Endothelial cell of umbilical vein (primary cell): ENCODE measurements at regions of chr2 and their contacts with region 1.

Region 1: GRCh38 chr2:134446383-134447017 is 192.6 kb downstream of the MGAT5 start:
- DNase-seq: peak; percentile 90
- H3K4me3 ChIP-seq: no peak overlapping the region
- H3K27ac ChIP-seq: peak overlapping the region; percentile 45
- H3K4me1 ChIP-seq: peaks cover 43% of the 10 kb centered on the region
- H3K27me3 ChIP-seq: no peaks in the 10 kb centered on the region
- CTCF ChIP-seq: no peak
- POLR2A ChIP-seq: peak; percentile 33

Region 2: GRCh38 chr2:133886735-133887660 is 559.5 kb before region 1 on chr2:
- CTCF ChIA-PET with region 1: interaction called, 155 read pairs
- POLR2A ChIA-PET with region 1: no interaction called
- dilution Hi-C with region 1: no loop called
- intact Hi-C with region 1: loop called (anchors 1 kb)
- DNase-seq: peak; percentile 61
- H3K4me3 ChIP-seq: no peak overlapping the region
- H3K27ac ChIP-seq: no peak overlapping the region
- H3K4me1 ChIP-seq: peaks cover 6% of the 10 kb centered on the region
- H3K27me3 ChIP-seq: peaks cover 0 to 26% of the 10 kb centered on the region in 2 experiments
- CTCF ChIP-seq: peak; percentile 60 to 65
- POLR2A ChIP-seq: no peak

Region 3: DNA sequence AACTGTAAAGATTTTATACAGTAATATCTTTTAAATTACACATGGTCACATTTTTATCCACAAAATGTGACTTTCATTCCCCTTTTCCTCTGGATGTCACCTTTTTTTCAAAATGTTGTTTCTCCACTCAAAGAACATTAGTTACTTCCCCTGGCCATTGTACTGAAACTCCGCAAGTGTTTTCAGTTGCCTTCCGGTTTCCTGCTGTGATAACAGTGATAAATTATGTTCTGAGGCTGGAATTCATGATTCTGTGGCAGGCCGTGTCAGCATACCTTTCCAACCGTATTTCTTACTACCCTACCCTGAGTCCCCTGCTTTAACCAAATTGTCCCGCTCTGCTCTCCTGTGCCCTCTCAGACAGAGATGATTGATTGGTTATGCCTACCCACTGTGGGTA is 139.2 kb before region 1 on chr2:
- CTCF ChIA-PET with region 1: interaction called, 11 read pairs
- POLR2A ChIA-PET with region 1: no interaction called
- dilution Hi-C with region 1: no loop called
- intact Hi-C with region 1: loop called (anchors 1 kb)
- DNase-seq: peak; percentile 91
- H3K4me3 ChIP-seq: peak overlapping the region in 1 of 3 experiments; percentile 26
- H3K27ac ChIP-seq: peak overlapping the region; percentile 91
- H3K4me1 ChIP-seq: peaks cover 72% of the 10 kb centered on the region
- H3K27me3 ChIP-seq: no peaks in the 10 kb centered on the region
- CTCF ChIP-seq: no peak
- POLR2A ChIP-seq: peak; percentile 56

Region 4: GRCh38 chr2:134375935-134376334 is 70.6 kb before region 1 on chr2:
- CTCF ChIA-PET with region 1: interaction called, 234 read pairs
- POLR2A ChIA-PET with region 1: interaction called, 3 read pairs
- dilution Hi-C with region 1: no loop called
- intact Hi-C with region 1: loop called (anchors 1 kb)
- DNase-seq: peak; percentile 64
- H3K4me3 ChIP-seq: no peak overlapping the region
- H3K27ac ChIP-seq: no peak overlapping the region
- H3K4me1 ChIP-seq: peaks cover 6% of the 10 kb centered on the region
- H3K27me3 ChIP-seq: no peaks in the 10 kb centered on the region
- CTCF ChIP-seq: peak; percentile 30 to 46
- POLR2A ChIP-seq: no peak

Region 5: DNA sequence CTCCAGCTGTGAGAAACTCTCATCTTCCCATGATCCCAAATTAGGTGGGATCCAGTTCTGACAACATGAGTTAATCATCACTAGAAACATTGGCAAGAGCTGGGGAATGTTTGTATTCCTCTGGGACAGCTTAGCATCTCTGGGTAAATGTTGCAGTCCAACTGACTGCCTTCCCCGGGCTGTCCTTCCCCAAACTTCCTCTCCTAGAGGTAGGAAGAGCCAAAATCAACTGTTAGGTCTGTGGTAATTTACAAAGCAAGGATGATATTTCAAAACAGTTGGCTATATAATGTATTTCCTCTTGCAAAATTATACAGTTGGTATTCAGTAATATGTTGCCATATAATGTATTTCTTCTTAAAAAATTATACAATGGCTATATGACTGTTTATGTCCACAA is 44.1 kb before region 1 on chr2:
- CTCF ChIA-PET with region 1: interaction called, 48 read pairs
- POLR2A ChIA-PET with region 1: interaction called, 3 read pairs
- dilution Hi-C with region 1: no loop called
- intact Hi-C with region 1: loop called (anchors 1 kb)
- DNase-seq: peak; percentile 21
- H3K4me3 ChIP-seq: no peak overlapping the region
- H3K27ac ChIP-seq: no peak overlapping the region
- H3K4me1 ChIP-seq: peaks cover 60% of the 10 kb centered on the region
- H3K27me3 ChIP-seq: no peaks in the 10 kb centered on the region
- CTCF ChIP-seq: no peak
- POLR2A ChIP-seq: no peak

Region 6: DNA sequence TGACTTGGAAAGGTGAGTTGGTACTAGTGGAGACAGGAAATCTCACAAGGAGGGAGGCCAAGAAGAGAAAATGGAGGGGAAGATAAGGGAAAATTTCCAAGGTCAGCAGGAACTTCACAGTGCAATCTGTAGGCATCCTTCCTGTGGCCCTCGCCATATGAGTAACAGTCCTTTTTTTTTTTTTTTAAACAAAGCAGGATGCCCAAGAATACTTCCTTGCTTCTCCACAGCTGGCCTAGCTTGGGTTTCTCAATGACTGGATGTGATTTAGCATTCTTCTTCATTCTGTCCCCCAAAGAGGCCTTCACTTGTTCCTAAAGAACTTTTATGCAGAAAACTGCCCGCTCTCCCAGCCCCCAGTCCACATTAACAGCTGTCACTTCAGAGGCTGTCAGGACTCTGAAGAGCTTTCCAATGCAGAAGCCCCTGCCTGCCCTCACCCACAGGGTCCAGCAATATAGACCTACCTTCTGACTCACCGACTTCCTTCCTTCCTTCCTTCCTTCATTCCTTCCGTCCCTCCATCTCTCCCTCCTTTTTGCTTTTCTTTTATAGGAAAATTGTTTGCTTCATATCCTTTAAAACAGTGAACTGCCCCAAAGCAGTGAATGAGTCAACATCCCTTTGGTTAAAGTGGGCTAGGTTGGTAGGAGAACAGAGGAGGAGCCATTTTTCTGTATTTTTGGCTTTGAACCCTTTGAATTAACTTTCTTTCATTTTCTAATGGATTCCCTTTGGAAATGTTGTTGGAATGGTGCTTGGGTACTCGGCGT is 20.6 kb before region 1 on chr2:
- CTCF ChIA-PET with region 1: interaction called, 94 read pairs
- POLR2A ChIA-PET with region 1: no interaction called
- dilution Hi-C with region 1: no loop called
- intact Hi-C with region 1: loop called (anchors 1 kb)
- DNase-seq: peak; percentile 60
- H3K4me3 ChIP-seq: no peak overlapping the region
- H3K27ac ChIP-seq: peak overlapping the region; percentile 76
- H3K4me1 ChIP-seq: peaks cover 37% of the 10 kb centered on the region
- H3K27me3 ChIP-seq: no peaks in the 10 kb centered on the region
- CTCF ChIP-seq: no peak
- POLR2A ChIP-seq: no peak

Region 7: GRCh38 chr2:134431838-134432434 is 14.6 kb before region 1 on chr2:
- CTCF ChIA-PET with region 1: interaction called, 94 read pairs
- POLR2A ChIA-PET with region 1: no interaction called
- dilution Hi-C with region 1: no loop called
- intact Hi-C with region 1: no loop called
- DNase-seq: peak; percentile 55
- H3K4me3 ChIP-seq: no peak overlapping the region
- H3K27ac ChIP-seq: peak overlapping the region; percentile 45
- H3K4me1 ChIP-seq: peaks cover 33% of the 10 kb centered on the region
- H3K27me3 ChIP-seq: no peaks in the 10 kb centered on the region
- CTCF ChIP-seq: no peak
- POLR2A ChIP-seq: no peak